Sigmoid colon (tissue), 7 donors: ENCODE measurements at regions of chr1 and their contacts with region 1.

Region 1: DNA sequence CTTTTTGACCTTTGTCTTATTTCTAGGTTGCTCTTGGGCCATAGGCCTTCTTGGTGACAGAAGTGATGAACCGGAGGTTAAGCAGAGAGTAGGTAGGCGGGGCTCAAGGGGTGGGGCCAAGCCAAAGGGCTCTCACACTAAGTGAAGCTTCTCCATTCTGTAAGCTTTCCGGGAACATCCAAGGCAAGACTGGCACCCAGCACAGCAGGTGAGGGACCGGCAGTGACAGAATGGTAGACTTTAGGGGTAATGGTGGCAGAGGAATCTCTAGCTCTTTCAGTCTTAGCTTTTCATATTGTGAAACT is at the start of gene TNFAIP8L2:
- DNase-seq: peak; percentile 75
- H3K4me3 ChIP-seq: peak within 1 kb of the TSS in 2 of 4 donors; percentile 11 to 29
- H3K27ac ChIP-seq: peak within 1 kb of the TSS in 2 of 4 donors; percentile 12 to 40
- H3K4me1 ChIP-seq: peaks cover 0 to 11% (median 0%) of the 10 kb centered on the region in 4 donors
- H3K27me3 ChIP-seq: no peaks in the 10 kb centered on the region
- CTCF ChIP-seq: no peak
- EP300 ChIP-seq: no peak
- POLR2A ChIP-seq: no peak
- total RNA-seq, gene TNFAIP8L2: 1.9 to 9.5 (median 7.5) TPM

Region 2: GRCh38 chr1:150813058-150813707 is 343.3 kb before region 1 on chr1:
- intact Hi-C with region 1: no loop called
- DNase-seq: peak; percentile 74
- H3K4me3 ChIP-seq: no peak overlapping the region
- H3K27ac ChIP-seq: no peak overlapping the region
- H3K4me1 ChIP-seq: peaks cover 0 to 10% (median 8%) of the 10 kb centered on the region in 4 donors
- H3K27me3 ChIP-seq: no peaks in the 10 kb centered on the region
- CTCF ChIP-seq: peak in 3 of 4 experiments; percentile 31 to 65 (median 41)
- EP300 ChIP-seq: no peak
- POLR2A ChIP-seq: no peak

Region 3: DNA sequence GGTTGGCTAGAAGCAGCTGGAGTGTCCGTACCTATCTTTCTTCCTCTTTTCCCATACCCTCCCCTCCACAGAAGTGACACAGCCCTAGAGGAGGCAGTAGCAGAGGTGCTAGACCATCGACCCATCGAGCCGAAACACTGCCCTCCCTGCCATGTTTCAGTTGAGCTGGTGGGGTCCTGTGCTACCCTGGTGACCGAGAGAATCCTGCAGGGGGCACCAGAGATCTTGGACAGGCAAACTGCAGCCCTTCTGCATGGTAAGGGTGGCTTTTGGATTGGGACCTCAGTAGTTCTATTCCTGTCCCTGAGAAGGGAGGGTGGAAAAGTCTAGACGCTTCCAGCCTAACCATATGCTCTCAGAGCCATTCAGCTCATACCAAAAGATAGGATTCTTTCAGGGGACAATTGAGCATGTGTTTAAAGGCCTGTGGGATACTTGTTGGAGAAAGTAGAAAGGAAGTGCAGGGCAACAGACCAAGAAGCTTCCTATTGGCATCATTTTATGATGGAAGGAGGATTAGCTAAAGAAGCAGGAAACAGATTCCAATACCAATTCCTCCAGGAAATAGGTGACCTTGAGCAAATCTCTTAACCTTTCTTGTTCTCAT is 131.8 kb before region 1 on chr1:
- intact Hi-C with region 1: loop called (anchors 5 kb)
- DNase-seq: peak; percentile 89
- H3K4me3 ChIP-seq: no peak overlapping the region
- H3K27ac ChIP-seq: peak overlapping the region; percentile 11 to 66 (median 35)
- H3K4me1 ChIP-seq: peaks cover 0 to 17% (median 10%) of the 10 kb centered on the region in 4 donors
- H3K27me3 ChIP-seq: no peaks in the 10 kb centered on the region
- CTCF ChIP-seq: peak in 3 of 4 experiments; percentile 66 to 71 (median 71)
- EP300 ChIP-seq: no peak
- POLR2A ChIP-seq: no peak

Region 4: GRCh38 chr1:151098126-151098525 is 58.3 kb before region 1 on chr1:
- intact Hi-C with region 1: loop called (anchors 1 kb)
- DNase-seq: no peak
- H3K4me3 ChIP-seq: no peak overlapping the region
- H3K27ac ChIP-seq: no peak overlapping the region
- H3K4me1 ChIP-seq: no peaks in the 10 kb centered on the region
- H3K27me3 ChIP-seq: no peaks in the 10 kb centered on the region
- CTCF ChIP-seq: no peak
- EP300 ChIP-seq: no peak
- POLR2A ChIP-seq: no peak